ENCODE measurements at regions of chr1 and their contacts with region 1.

Region 1: DNA sequence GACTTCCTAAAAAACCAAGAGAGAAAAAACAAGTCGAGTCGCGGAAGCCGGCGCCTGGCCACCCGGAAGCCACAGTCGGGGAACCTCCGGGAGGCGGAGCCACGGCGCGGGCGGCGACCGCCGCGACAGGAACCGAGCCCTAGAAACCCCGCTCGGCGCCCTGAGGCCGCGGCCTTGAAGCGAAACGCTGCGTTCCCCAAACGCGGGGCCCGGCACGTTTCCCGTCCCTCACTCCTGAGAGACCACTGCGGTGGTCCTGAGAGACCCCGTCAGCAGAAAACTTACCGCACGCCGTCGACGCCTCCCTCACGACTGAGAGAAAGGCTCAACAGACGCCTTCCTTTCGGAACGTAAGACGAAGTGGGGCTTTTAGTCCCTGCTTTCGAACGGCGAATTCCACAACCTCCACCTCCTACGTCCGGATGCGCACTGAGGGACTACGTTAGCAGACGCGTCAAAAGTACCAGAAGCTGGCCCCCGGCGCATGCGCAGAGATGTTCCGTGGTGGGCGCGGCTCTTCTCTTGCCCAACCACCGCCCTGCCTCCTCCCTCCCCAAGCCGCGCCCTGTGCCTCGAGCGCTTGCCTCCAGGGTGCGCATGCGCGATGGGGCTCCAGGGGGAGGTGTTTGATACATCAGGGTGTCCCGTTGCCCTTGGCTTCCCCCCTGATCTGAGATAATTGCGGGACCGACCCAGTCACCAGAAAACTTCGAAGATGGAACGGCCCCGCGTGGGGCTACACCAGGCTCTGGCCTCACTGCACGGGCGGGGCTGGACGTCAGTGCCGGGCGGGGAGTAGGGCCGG is at the start of gene RSRP1:
- DNase-seq: peak; percentile 96
- H3K4me3 Mint-ChIP-seq: peak within 1 kb of the TSS; percentile 93
- H3K27ac Mint-ChIP-seq: peak within 1 kb of the TSS; percentile 98
- H3K4me1 Mint-ChIP-seq: peaks cover 13% of the 10 kb centered on the region
- H3K27me3 Mint-ChIP-seq: no peaks in the 10 kb centered on the region
- CTCF ChIP-seq: no peak
- total RNA-seq, gene RSRP1: 77.2 and 86.4 TPM in 2 replicates

Region 2: GRCh38 chr1:25356848-25357247 is 109.6 kb after region 1 on chr1:
- CTCF ChIA-PET with region 1: interaction called, 3 read pairs
- POLR2A ChIA-PET with region 1: interaction called, 14 read pairs
- intact Hi-C with region 1: no loop called
- DNase-seq: peak; percentile 41
- H3K4me3 Mint-ChIP-seq: no peak overlapping the region
- H3K27ac Mint-ChIP-seq: peak overlapping the region; percentile 52
- H3K4me1 Mint-ChIP-seq: peaks cover 18% of the 10 kb centered on the region
- H3K27me3 Mint-ChIP-seq: no peaks in the 10 kb centered on the region
- CTCF ChIP-seq: no peak

Region 3: GRCh38 chr1:25572708-25573600 is 325.7 kb after region 1 on chr1:
- CTCF ChIA-PET with region 1: no interaction called
- POLR2A ChIA-PET with region 1: no interaction called
- intact Hi-C with region 1: no loop called
- DNase-seq: peak; percentile 65
- H3K4me3 Mint-ChIP-seq: peak overlapping the region; percentile 63
- H3K27ac Mint-ChIP-seq: peak overlapping the region; percentile 74
- H3K4me1 Mint-ChIP-seq: peaks cover 39% of the 10 kb centered on the region
- H3K27me3 Mint-ChIP-seq: no peaks in the 10 kb centered on the region
- CTCF ChIP-seq: peak; percentile 70